Right cardiac atrium (tissue), 5 donors: ENCODE measurements at regions of chr15 and their contacts with region 1.

Region 1: GRCh38 chr15:38817427-38818156 is 253.0 kb upstream of the RASGRP1 start:
- DNase-seq: peak; percentile 71 to 93 (median 90)
- ATAC-seq: peak; percentile 92
- H3K4me3 ChIP-seq: no peak overlapping the region
- H3K27ac ChIP-seq: no peak overlapping the region
- H3K4me1 ChIP-seq: no peaks in the 10 kb centered on the region
- H3K27me3 ChIP-seq: no peaks in the 10 kb centered on the region

Region 2: DNA sequence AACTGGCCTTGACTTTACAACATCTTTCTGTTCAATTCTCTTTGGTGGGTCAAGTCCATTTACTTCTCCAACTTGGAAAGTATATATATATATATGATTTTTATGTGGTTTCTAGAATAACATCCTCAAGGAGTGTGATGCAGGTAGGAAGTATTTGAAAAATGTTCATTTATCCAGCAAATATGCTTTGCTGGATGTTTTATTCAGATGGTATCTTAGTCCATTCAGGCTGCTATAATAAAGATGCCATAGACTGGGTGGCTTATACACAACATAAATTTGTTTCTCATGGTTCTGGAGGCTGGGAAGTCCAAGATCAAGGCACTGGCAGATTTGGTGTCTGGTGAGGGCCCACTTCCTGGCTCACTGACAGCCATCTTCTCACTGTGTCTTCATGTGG is 84.3 kb before region 1 on chr15:
- intact Hi-C with region 1: no loop called
- DNase-seq: no peak
- ATAC-seq: no peak
- H3K4me3 ChIP-seq: no peak overlapping the region
- H3K27ac ChIP-seq: no peak overlapping the region
- H3K4me1 ChIP-seq: no peaks in the 10 kb centered on the region
- H3K27me3 ChIP-seq: no peaks in the 10 kb centered on the region

Region 3: DNA sequence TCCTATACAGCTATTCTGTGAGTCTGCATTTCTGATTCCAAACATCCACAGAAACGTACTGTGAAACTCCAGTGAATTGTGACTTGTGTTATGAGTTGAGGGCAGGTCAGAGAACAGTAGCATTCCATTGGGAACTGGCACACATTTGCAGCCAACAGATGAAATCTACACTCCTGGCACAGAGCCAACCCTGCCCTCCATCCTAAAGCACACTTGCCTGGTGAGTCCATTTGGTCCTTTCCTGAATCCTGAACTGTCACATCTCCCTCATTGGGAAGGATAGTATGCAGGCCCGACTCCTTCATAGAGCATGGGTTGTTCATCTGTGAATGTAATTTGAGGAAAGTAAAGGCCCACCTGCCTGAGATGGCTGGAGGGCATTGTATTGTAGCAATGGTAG is 61.3 kb after region 1 on chr15:
- intact Hi-C with region 1: no loop called
- DNase-seq: peak in 1 of 3 donors; percentile 36
- ATAC-seq: no peak
- H3K4me3 ChIP-seq: no peak overlapping the region
- H3K27ac ChIP-seq: no peak overlapping the region
- H3K4me1 ChIP-seq: peaks cover 7% of the 10 kb centered on the region
- H3K27me3 ChIP-seq: no peaks in the 10 kb centered on the region

Region 4: DNA sequence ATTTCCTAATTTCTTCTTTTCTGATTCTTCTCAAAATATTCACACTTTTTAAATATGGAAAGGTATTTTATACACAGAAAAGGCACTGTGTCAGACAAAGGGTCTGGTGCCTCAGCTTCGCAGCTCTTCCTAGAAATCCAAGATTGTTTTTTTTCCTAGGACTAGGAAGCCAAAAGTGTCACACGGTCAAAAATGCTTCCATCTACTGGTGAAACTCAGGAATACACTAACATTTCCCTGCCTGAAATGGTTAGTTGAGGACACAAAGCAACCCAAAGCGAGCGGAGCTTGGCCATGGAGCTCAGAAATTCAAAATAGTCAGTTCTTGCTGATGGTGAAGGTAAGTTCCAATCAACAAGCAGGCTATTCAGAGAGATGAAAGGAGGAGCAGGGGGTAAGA is 173.5 kb after region 1 on chr15:
- intact Hi-C with region 1: loop called in 3 of 4 experiments (anchors 5 to 10 kb)
- DNase-seq: no peak
- ATAC-seq: peak; percentile 25 to 50
- H3K4me3 ChIP-seq: no peak overlapping the region
- H3K27ac ChIP-seq: no peak overlapping the region
- H3K4me1 ChIP-seq: peaks cover 10% of the 10 kb centered on the region
- H3K27me3 ChIP-seq: no peaks in the 10 kb centered on the region

Region 5: DNA sequence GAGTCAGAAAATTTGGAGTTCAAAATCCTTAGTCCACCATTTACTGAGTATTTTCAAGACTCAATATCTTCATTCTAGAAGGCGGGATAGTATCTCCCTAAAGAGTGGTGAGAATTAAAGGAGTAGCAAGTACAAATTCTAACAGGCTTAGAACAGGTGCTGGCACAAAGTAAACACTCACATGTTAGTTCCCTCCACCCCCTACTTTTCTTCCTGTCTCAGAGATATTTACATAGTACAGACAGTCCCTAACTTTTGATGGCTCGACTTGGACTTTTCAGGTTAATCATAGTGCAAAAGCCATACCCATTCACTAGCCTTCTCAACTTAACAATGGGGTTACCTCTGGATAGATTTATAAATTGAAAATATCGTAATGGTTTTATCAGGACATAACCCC is 223.3 kb after region 1 on chr15:
- intact Hi-C with region 1: no loop called
- DNase-seq: no peak
- ATAC-seq: no peak
- H3K4me3 ChIP-seq: no peak overlapping the region
- H3K27ac ChIP-seq: no peak overlapping the region
- H3K4me1 ChIP-seq: no peaks in the 10 kb centered on the region
- H3K27me3 ChIP-seq: no peaks in the 10 kb centered on the region